CD4-positive, alpha-beta memory T cell (primary cell): ENCODE measurements at regions of chr17 and their contacts with region 1.

Region 1: DNA sequence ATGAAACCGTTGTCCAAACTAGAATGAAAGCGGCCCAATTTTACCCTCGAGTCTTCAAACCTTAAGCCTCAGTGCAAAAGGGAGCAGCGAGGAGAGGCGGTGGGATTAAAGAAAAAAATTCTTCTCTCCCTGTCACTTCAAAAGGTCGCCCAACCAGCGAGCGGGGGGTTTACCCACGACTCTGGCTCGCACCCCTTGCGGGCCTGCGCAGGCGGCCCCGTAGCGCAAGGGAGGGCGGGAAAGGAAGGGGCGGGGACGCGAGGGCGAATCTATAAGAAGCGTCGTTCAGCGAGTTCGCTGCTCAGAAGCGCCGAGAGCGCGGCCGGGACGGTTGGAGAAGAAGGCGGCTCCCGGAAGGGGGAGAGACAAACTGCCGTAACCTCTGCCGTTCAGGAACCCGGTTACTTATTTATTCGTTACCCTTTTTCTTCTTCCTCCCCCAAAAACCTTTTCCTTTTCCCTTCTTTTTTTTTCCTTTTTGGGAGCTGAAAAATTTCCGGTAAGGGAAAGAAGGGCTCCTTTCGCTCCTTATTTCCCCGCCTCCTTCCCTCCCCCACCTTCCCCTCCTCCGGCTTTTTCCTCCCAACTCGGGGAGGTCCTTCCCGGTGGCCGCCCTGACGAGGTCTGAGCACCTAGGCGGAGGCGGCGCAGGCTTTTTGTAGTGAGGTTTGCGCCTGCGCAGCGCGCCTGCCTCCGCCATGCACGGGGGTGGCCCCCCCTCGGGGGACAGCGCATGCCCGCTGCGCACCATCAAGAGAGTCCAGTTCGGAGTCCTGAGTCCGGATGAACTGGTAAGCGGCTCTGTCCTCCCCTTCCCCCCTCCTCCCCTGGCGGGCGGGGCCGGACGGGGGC is at the start of gene POLR2A:
- DNase-seq: peak; percentile 97 to 99 (median 99)
- H3K4me3 ChIP-seq: peak within 1 kb of the TSS; percentile 92 to 95
- H3K4me3 Mint-ChIP-seq: peak within 1 kb of the TSS; percentile 96 to 100 (median 98)
- H3K27ac ChIP-seq: peak within 1 kb of the TSS; percentile 99
- H3K27ac Mint-ChIP-seq: peak within 1 kb of the TSS; percentile 99 to 100 (median 100)
- H3K4me1 ChIP-seq: peaks cover 59% of the 10 kb centered on the region
- H3K4me1 Mint-ChIP-seq: peaks cover 47 to 89% (median 65%) of the 10 kb centered on the region in 4 donors
- H3K27me3 ChIP-seq: no peaks in the 10 kb centered on the region
- H3K27me3 Mint-ChIP-seq: no peaks in the 10 kb centered on the region
- total RNA-seq, gene POLR2A: 178 to 191 TPM

Region 2: DNA sequence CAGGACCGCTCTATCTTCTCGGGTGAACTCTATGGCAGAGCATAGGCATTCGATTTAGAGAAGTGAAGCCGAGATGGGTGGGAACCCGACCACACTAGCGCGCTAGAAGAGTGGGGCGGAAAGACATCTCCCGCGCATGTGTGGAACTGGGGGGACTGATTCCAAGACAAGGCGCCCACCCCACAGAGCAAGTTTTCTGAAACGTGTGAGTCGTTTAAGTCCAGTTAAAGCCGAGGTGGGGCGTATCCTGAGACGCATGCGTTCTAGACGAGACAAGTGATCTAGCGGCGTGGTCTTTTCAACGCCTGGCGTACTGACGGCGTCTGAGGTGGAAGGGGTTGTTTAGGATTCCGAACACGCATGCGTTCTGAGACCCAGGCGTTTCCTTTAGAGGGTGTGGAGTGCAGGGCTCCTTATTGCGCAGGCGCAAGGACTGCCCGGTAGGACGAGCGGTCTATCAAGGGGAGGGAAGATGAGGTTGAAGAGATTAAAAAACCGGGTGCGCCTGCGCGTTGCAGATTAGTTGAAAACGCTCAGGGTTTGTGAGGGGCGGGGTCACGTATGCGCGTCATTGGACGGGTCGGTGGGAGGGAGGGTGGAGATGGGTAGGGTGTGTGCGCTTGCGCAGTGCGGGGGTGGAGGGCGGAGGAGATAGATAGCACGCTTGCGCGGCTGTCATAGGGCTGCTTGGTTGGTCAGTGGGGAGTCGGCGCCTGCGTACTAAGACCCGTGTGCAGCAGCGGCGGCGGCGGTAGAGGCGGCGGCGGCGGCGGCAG is 177.2 kb before region 1 on chr17 and contains the start of gene EIF5A:
- CTCF ChIA-PET with region 1: no interaction called
- POLR2A ChIA-PET with region 1: interaction called, 14 read pairs
- intact Hi-C with region 1: no loop called
- DNase-seq: peak; percentile 99 to 100 (median 100)
- H3K4me3 ChIP-seq: peak within 1 kb of the TSS; percentile 81 to 85
- H3K4me3 Mint-ChIP-seq: peak within 1 kb of the TSS; percentile 93 to 97 (median 95)
- H3K27ac ChIP-seq: peak within 1 kb of the TSS; percentile 100
- H3K27ac Mint-ChIP-seq: peak within 1 kb of the TSS; percentile 99 to 100 (median 99)
- H3K4me1 ChIP-seq: peaks cover 35% of the 10 kb centered on the region
- H3K4me1 Mint-ChIP-seq: peaks cover 29 to 47% (median 36%) of the 10 kb centered on the region in 4 donors
- H3K27me3 ChIP-seq: no peaks in the 10 kb centered on the region
- H3K27me3 Mint-ChIP-seq: peaks cover 0 to 4% of the 10 kb centered on the region in 2 donors
- total RNA-seq, gene EIF5A: 240 to 244 TPM

Region 3: GRCh38 chr17:7351665-7352501 is 132.4 kb before region 1 on chr17 and contains the start of gene KCTD11:
- CTCF ChIA-PET with region 1: interaction called, 7 read pairs
- POLR2A ChIA-PET with region 1: interaction called, 22 read pairs
- intact Hi-C with region 1: loop called (anchors 1 kb)
- DNase-seq: peak; percentile 64 to 88 (median 68)
- H3K4me3 ChIP-seq: peak within 1 kb of the TSS; percentile 29 to 49
- H3K4me3 Mint-ChIP-seq: peak within 1 kb of the TSS; percentile 80 to 95 (median 84)
- H3K27ac ChIP-seq: peak within 1 kb of the TSS; percentile 68
- H3K27ac Mint-ChIP-seq: peak within 1 kb of the TSS; percentile 62 to 95 (median 87)
- H3K4me1 ChIP-seq: peaks cover 44% of the 10 kb centered on the region
- H3K4me1 Mint-ChIP-seq: peaks cover 21 to 61% (median 40%) of the 10 kb centered on the region in 4 donors
- H3K27me3 ChIP-seq: no peaks in the 10 kb centered on the region
- H3K27me3 Mint-ChIP-seq: no peaks in the 10 kb centered on the region
- total RNA-seq, gene KCTD11: 3.5 to 4.3 TPM

Region 4: DNA sequence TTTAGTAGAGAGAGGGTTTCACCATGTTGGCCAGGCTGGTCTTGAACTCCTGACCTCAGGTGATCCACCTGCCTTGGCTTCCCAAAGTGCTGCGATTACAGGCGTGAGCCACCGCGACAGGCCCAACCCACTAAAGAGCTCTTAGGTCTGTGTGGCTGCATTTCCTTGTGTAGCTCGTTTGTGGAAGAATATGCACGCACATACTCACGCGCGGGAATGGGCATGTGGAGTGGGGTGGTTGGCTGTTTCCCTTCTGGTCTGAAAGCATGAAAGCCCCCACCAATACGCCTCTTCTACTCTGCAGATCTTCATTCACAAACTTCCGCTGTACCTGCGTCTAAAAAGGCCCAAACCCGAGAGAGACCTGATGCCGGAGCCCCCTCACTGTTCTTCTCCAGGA is 29.3 kb before region 1 on chr17:
- CTCF ChIA-PET with region 1: interaction called, 8 read pairs
- POLR2A ChIA-PET with region 1: interaction called, 398 read pairs
- intact Hi-C with region 1: loop called (anchors 1 kb)
- DNase-seq: no peak
- H3K4me3 ChIP-seq: peak overlapping the region; percentile 86 to 93
- H3K4me3 Mint-ChIP-seq: peak overlapping the region; percentile 92 to 100 (median 94)
- H3K27ac ChIP-seq: peak overlapping the region; percentile 73
- H3K27ac Mint-ChIP-seq: peak overlapping the region; percentile 88 to 98 (median 94)
- H3K4me1 ChIP-seq: peaks cover 23% of the 10 kb centered on the region
- H3K4me1 Mint-ChIP-seq: peaks cover 18 to 36% (median 22%) of the 10 kb centered on the region in 4 donors
- H3K27me3 ChIP-seq: no peaks in the 10 kb centered on the region
- H3K27me3 Mint-ChIP-seq: peaks cover 0 to 2% of the 10 kb centered on the region in 2 donors

Region 5: DNA sequence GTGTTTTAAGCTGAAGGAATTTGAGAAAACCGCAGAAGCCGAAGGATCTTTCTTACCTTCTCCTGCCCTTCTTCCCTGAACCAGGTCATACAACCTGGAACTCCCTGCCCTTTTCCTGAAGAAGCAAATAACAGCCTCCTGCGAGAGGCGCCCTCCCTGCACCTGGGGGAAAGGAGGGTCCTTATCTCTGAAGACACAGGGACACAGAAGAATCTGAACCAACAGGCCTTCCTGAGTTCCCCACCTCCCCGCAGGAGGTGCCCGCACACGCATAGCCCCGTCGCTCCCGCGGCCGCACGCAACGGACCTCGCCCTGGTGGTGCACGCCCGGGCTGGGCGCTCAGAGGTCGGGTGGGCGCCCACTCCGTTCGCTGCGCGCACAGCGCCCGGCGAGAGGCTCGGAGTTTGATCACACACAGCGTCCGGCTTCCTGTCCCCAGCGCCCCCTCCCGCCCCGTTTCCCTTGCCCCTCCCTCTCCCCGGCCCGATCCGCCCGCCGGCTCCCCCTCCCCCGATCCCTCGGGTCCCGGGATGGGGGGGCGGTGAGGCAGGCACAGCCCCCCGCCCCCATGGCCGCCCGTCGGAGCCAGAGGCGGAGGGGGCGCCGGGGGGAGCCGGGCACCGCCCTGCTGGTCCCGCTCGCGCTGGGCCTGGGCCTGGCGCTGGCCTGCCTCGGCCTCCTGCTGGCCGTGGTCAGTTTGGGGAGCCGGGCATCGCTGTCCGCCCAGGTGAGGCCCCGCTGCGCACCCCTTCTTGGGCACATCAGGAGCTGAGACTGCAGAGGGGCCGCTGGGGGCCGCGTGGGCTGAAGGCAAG is 64.5 kb after region 1 on chr17 and contains the start of gene TNFSF12:
- CTCF ChIA-PET with region 1: no interaction called
- POLR2A ChIA-PET with region 1: interaction called, 17 read pairs
- intact Hi-C with region 1: loop called (anchors 2 kb)
- DNase-seq: peak; percentile 38 to 64 (median 42)
- H3K4me3 ChIP-seq: peak within 1 kb of the TSS; percentile 72 to 82
- H3K4me3 Mint-ChIP-seq: peak within 1 kb of the TSS; percentile 88 to 96 (median 92)
- H3K27ac ChIP-seq: peak within 1 kb of the TSS; percentile 79
- H3K27ac Mint-ChIP-seq: peak within 1 kb of the TSS; percentile 81 to 96 (median 94)
- H3K4me1 ChIP-seq: peaks cover 37% of the 10 kb centered on the region
- H3K4me1 Mint-ChIP-seq: peaks cover 30 to 52% (median 43%) of the 10 kb centered on the region in 4 donors
- H3K27me3 ChIP-seq: no peaks in the 10 kb centered on the region
- H3K27me3 Mint-ChIP-seq: no peaks in the 10 kb centered on the region
- total RNA-seq, gene TNFSF12: 45.1 to 52.2 TPM

Region 6: GRCh38 chr17:7606280-7606679 is 122.0 kb after region 1 on chr17:
- CTCF ChIA-PET with region 1: no interaction called
- POLR2A ChIA-PET with region 1: no interaction called
- intact Hi-C with region 1: no loop called
- DNase-seq: no peak
- H3K4me3 ChIP-seq: no peak overlapping the region
- H3K4me3 Mint-ChIP-seq: peak overlapping the region in 1 of 8 donors; percentile 17
- H3K27ac ChIP-seq: no peak overlapping the region
- H3K27ac Mint-ChIP-seq: peak overlapping the region in 1 of 7 donors; percentile 38
- H3K4me1 ChIP-seq: peaks cover 13% of the 10 kb centered on the region
- H3K4me1 Mint-ChIP-seq: peaks cover 9 to 28% (median 17%) of the 10 kb centered on the region in 4 donors
- H3K27me3 ChIP-seq: no peaks in the 10 kb centered on the region
- H3K27me3 Mint-ChIP-seq: no peaks in the 10 kb centered on the region